Activated CD4-positive, alpha-beta memory T cell treated with anti-CD3 and anti-CD28 coated beads, Interleukin-2, amount 10 ng/mL, durations not matched to agents 7 days and 5 days (primary cell): ENCODE measurements at regions of chr6 and their contacts with region 1.

Region 1: DNA sequence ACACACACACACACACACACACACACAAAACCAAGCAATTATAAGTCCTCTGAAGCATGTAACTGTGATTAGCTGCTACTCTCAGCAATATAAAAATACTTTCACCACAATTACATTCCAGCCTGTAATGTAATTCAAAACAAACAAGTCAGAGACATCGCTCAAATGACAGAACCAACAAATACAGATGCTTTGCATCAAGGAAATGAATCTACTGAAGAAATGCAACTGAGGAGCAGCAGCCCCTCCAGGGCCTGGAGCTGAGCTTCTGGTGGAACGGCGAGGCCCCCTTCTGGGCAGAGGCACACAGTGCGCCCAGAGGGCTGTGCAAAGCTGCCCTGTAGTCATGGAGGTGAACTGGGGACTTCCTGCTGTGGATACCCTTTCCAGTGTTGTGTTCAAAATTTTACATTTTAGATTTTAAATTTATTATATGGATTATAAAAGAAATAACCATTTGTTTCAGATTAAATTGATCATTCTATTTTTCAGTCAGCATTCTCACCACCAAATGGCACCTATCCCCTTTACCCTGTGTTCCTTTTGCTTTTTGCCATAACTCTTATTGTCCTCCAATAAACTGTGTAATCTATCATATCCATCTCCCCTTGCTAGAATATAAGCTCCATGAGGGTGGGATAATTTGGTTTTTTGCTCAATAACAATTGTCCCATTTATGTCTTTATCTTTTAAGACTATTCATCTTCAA is 23.2 kb downstream of the ADAT2 start:
- DNase-seq: peak; percentile 72
- H3K4me3 Mint-ChIP-seq: no peak overlapping the region
- H3K27ac Mint-ChIP-seq: no peak overlapping the region
- H3K4me1 Mint-ChIP-seq: peaks cover 1% of the 10 kb centered on the region
- H3K27me3 Mint-ChIP-seq: no peaks in the 10 kb centered on the region

Region 2: DNA sequence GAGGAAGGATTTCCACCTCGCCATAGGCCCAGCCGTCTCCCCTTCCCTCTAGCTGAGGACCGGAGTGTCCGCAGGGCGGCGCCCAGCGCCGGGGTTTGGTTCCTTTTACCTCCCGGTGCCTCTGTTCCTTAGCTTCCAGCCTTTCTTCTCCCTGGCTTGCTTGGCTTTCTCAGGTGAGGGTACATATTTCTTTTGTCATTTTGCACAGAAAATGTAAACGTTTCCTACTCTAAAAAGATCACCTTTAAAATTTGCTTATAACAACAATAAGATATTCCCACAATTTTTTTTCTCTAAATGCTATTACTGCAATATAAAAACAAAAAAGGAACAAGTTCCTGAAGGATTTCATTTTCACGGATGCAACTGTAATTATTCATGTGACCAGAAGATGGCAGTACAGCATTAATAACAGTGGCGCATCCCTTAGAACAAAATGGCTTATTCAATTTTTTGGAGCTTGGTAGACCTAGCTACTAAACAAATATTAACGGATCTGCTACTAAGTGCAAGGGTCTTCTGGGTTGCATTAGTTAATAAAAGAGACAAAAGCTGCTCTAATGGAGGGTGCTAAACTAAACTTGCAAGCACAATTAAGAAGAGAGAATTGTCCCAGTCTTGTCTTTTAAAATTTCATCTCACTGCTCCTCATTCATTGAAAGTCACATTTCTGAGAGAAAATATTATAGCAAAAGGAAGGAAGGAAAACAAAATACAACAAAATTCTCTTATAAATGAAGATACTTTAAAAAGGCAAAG is 952.6 kb before region 1 on chr6:
- CTCF ChIA-PET with region 1: interaction called, 32 read pairs
- POLR2A ChIA-PET with region 1: no interaction called
- DNase-seq: no peak
- H3K4me3 Mint-ChIP-seq: no peak overlapping the region
- H3K27ac Mint-ChIP-seq: no peak overlapping the region
- H3K4me1 Mint-ChIP-seq: no peaks in the 10 kb centered on the region
- H3K27me3 Mint-ChIP-seq: peaks cover 5% of the 10 kb centered on the region

Region 3: GRCh38 chr6:142692942-142693341 is 734.3 kb before region 1 on chr6:
- CTCF ChIA-PET with region 1: interaction called, 34 read pairs
- POLR2A ChIA-PET with region 1: no interaction called
- DNase-seq: peak; percentile 64
- H3K4me3 Mint-ChIP-seq: no peak overlapping the region
- H3K27ac Mint-ChIP-seq: no peak overlapping the region
- H3K4me1 Mint-ChIP-seq: peaks cover 6% of the 10 kb centered on the region
- H3K27me3 Mint-ChIP-seq: no peaks in the 10 kb centered on the region

Region 4: GRCh38 chr6:143232849-143233248 is 194.4 kb before region 1 on chr6:
- CTCF ChIA-PET with region 1: interaction called, 14 read pairs
- POLR2A ChIA-PET with region 1: no interaction called
- DNase-seq: peak; percentile 28
- H3K4me3 Mint-ChIP-seq: no peak overlapping the region
- H3K27ac Mint-ChIP-seq: no peak overlapping the region
- H3K4me1 Mint-ChIP-seq: no peaks in the 10 kb centered on the region
- H3K27me3 Mint-ChIP-seq: no peaks in the 10 kb centered on the region